Natural killer cell (primary cell): ENCODE measurements at regions of chr1 and their contacts with region 1.

Region 1: GRCh38 chr1:33295450-33296081 is 25.3 kb downstream of the A3GALT2 start:
- DNase-seq: peak; percentile 83 to 92
- ATAC-seq: peak; percentile 89 to 96 (median 92)
- H3K4me3 ChIP-seq: no peak overlapping the region
- H3K4me3 Mint-ChIP-seq: no peak overlapping the region
- H3K27ac ChIP-seq: no peak overlapping the region
- H3K27ac Mint-ChIP-seq: peak overlapping the region in 1 of 2 donors; percentile 53
- H3K4me1 ChIP-seq: peaks cover 8% of the 10 kb centered on the region
- H3K4me1 Mint-ChIP-seq: peaks cover 25 to 38% of the 10 kb centered on the region in 2 donors
- H3K27me3 ChIP-seq: no peaks in the 10 kb centered on the region
- H3K27me3 Mint-ChIP-seq: no peaks in the 10 kb centered on the region
- CTCF ChIP-seq: peak; percentile 97

Region 2: DNA sequence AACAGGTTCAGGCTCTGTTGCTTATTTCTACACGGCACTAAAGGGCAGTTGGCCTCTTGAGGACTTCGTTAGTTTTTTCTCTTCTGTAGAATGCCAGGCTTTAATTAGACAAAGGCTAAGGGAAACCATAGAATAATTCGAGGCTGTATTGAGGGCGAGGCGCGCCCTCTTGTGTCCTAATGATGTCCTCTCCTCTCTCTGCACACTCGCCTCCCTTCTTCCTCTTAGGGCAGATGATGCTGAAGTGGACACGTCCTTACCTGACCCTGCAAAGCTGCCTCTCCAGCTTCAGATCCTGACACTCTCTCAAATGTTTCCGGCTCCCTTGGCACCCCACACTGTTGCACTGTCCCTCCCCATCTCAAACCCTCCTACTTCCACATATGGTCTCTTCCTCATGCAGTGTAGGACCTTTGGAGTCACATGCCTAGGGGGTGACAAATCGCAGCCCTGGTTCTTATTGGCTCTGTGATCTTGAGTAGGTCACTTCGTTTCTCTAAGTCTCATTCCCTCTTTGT is 175.0 kb after region 1 on chr1:
- intact Hi-C with region 1: loop called (anchors 1 kb)
- DNase-seq: peak; percentile 39 to 76
- ATAC-seq: peak; percentile 45 to 60 (median 51)
- H3K4me3 ChIP-seq: no peak overlapping the region
- H3K4me3 Mint-ChIP-seq: peak overlapping the region; percentile 60
- H3K27ac ChIP-seq: no peak overlapping the region
- H3K27ac Mint-ChIP-seq: no peak overlapping the region
- H3K4me1 ChIP-seq: peaks cover 16% of the 10 kb centered on the region
- H3K4me1 Mint-ChIP-seq: peaks cover 21 to 27% of the 10 kb centered on the region in 2 donors
- H3K27me3 ChIP-seq: no peaks in the 10 kb centered on the region
- H3K27me3 Mint-ChIP-seq: no peaks in the 10 kb centered on the region
- CTCF ChIP-seq: peak; percentile 69